AG04450 (cell line): ENCODE measurements at regions of chr3 and their contacts with region 1.

Region 1: DNA sequence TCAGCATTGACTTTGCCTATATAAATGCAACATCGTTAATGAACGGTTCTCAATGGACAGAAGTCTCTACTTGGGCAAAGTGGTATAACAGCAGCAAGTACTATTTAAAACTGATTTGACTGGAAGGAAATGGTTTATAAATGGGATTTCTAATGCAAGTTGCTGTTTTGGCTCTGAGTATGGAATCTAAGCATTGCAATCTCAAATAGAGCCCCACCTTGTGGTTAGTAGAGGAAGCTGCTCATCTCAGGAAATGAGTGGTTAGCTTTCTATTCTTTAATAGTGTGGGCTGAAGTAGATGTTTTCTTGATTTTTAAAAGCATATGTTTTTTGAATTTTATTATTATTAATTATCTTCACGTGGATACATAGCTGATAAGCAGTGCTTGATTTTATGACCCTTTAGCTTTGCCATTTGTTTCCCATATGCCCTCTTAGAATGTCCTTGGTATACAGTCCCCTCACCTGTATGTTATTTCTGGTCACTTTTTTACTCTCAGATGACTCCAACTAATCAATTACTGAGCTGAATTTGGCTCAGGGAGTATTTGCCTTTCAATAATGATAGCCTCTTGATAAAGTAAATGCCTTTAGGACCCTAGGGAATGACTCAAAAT is 67.1 kb downstream of the OXSM start:
- DNase-seq: peak; percentile 15
- H3K4me3 ChIP-seq: no peak overlapping the region
- H3K27ac ChIP-seq: no peak overlapping the region
- H3K27me3 ChIP-seq: no peaks in the 10 kb centered on the region
- CTCF ChIP-seq: peak; percentile 88

Region 2: GRCh38 chr3:25831578-25831977 is 25.4 kb before region 1 on chr3:
- CTCF ChIA-PET with region 1: interaction called, 11 read pairs
- POLR2A ChIA-PET with region 1: no interaction called
- DNase-seq: no peak
- H3K4me3 ChIP-seq: no peak overlapping the region
- H3K27ac ChIP-seq: no peak overlapping the region
- H3K27me3 ChIP-seq: no peaks in the 10 kb centered on the region
- CTCF ChIP-seq: peak; percentile 61

Region 3: GRCh38 chr3:25844891-25845290 is 12.1 kb before region 1 on chr3:
- CTCF ChIA-PET with region 1: interaction called, 13 read pairs
- POLR2A ChIA-PET with region 1: no interaction called
- DNase-seq: no peak
- H3K4me3 ChIP-seq: no peak overlapping the region
- H3K27ac ChIP-seq: no peak overlapping the region
- H3K27me3 ChIP-seq: no peaks in the 10 kb centered on the region
- CTCF ChIP-seq: no peak

Region 4: GRCh38 chr3:25889525-25889917 is 32.5 kb after region 1 on chr3:
- CTCF ChIA-PET with region 1: interaction called, 11 read pairs
- POLR2A ChIA-PET with region 1: interaction called, 3 read pairs
- DNase-seq: no peak
- H3K4me3 ChIP-seq: no peak overlapping the region
- H3K27ac ChIP-seq: no peak overlapping the region
- H3K27me3 ChIP-seq: no peaks in the 10 kb centered on the region
- CTCF ChIP-seq: no peak

Region 5: DNA sequence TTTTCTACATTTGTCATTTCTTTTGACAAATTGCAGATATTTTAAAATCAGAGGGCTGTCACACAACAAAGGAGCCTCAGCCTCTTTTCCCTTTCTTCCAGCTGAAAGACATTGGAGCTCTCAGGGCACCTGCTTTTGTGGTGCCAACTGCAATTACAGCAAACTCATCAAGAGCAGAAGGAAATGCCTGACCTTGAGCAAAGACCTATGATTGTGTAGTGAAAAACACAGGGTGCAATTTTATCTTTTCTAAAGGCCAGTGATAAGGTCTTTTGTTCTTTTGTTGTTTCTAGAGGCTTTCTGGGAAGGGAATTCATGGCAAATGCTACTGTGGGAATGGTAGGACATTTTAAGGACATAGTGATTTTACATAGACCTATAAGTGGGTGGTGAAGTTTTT is 147.2 kb after region 1 on chr3:
- CTCF ChIA-PET with region 1: no interaction called
- POLR2A ChIA-PET with region 1: no interaction called
- DNase-seq: no peak
- H3K4me3 ChIP-seq: no peak overlapping the region
- H3K27ac ChIP-seq: no peak overlapping the region
- H3K27me3 ChIP-seq: no peaks in the 10 kb centered on the region
- CTCF ChIP-seq: no peak